IMR-90 (cell line): ENCODE measurements at regions of chr16 and their contacts with region 1.

Region 1: DNA sequence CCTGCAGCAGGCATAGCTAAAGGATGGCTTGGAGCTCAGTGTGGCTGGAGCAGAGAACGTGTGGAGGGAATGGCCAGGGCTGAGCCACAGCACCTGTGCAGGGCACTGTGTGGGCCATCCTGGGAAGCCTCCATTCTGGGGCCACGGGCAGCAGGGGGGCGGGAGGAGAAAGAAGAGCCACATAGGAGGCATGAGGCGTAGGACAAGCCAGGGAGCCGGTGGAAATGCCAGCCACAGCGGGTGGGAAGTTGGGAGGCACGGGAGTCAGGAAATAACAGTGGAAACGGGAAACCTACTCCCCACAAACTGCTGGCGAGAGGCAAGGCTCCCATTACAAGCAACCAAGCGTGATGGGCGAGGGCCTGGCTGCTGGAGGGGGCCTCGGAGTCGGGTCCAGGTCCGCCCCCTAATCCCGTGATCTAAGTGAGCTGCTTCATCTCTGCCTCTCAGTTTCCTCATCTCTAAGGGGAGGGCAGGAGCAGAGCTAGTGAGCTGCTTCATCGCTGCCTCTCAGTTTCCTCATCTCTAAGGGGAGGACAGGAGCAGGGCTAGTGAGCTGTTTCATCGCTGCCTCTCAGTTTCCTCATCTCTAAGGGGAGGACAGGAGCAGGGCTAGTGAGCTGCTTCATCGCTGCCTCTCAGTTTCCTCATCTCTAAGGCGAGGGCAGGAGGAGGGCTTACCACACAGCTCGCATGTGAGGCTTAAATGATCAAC is 104.9 kb downstream of the ADCY9 start:
- DNase-seq: no peak
- ATAC-seq: no peak
- H3K4me3 ChIP-seq: no peak overlapping the region
- H3K27ac ChIP-seq: peak overlapping the region; percentile 40; the same call in 1 of the 2 replicates
- H3K4me1 ChIP-seq: peaks cover 22% of the 10 kb centered on the region
- H3K27me3 ChIP-seq: no peaks in the 10 kb centered on the region
- CTCF ChIP-seq: no peak
- POLR2A ChIP-seq: no peak
- RAD21 ChIP-seq: no peak

Region 2: GRCh38 chr16:4064950-4065352 is 53.6 kb after region 1 on chr16:
- CTCF ChIA-PET with region 1: no interaction called
- POLR2A ChIA-PET with region 1: no interaction called
- dilution Hi-C with region 1: no loop called
- in situ Hi-C with region 1: no loop called
- intact Hi-C with region 1: no loop called
- DNase-seq: no peak
- ATAC-seq: no peak
- H3K4me3 ChIP-seq: no peak overlapping the region
- H3K27ac ChIP-seq: no peak overlapping the region
- H3K4me1 ChIP-seq: peaks cover 4% of the 10 kb centered on the region; the same call in 1 of the 2 replicates
- H3K27me3 ChIP-seq: no peaks in the 10 kb centered on the region
- CTCF ChIP-seq: no peak
- POLR2A ChIP-seq: no peak
- RAD21 ChIP-seq: no peak

Region 3: DNA sequence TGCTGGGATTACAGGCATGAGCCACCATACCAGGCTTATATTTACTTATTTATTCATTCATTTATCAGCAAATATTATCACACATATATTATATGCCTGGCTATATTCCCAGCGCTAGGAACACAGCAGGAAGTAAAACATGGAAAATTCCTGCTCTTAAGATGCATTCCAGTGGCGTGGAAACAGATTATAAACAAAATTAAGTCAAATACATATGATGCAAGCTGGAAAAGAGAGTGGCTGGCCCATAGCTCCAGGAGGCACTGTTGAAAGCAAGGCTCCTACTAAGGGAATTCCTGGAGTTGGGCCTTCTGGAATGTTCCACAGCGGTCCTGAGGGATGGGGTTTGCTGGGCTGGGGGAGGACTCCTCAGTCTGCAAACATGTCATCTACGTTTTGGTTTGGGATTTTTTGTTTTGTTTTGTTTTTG is 86.4 kb after region 1 on chr16:
- CTCF ChIA-PET with region 1: no interaction called
- POLR2A ChIA-PET with region 1: no interaction called
- dilution Hi-C with region 1: no loop called
- in situ Hi-C with region 1: no loop called
- intact Hi-C with region 1: loop called (anchors 2 kb)
- DNase-seq: peak; percentile 70
- ATAC-seq: peak; percentile 78
- H3K4me3 ChIP-seq: no peak overlapping the region
- H3K27ac ChIP-seq: peak overlapping the region; percentile 75
- H3K4me1 ChIP-seq: peaks cover 9% of the 10 kb centered on the region
- H3K27me3 ChIP-seq: no peaks in the 10 kb centered on the region
- CTCF ChIP-seq: no peak
- POLR2A ChIP-seq: no peak
- RAD21 ChIP-seq: no peak; the same call in 1 of the 2 replicates